CD14-positive monocyte (primary cell): ENCODE measurements at regions of chr5 and their contacts with region 1.

Region 1: DNA sequence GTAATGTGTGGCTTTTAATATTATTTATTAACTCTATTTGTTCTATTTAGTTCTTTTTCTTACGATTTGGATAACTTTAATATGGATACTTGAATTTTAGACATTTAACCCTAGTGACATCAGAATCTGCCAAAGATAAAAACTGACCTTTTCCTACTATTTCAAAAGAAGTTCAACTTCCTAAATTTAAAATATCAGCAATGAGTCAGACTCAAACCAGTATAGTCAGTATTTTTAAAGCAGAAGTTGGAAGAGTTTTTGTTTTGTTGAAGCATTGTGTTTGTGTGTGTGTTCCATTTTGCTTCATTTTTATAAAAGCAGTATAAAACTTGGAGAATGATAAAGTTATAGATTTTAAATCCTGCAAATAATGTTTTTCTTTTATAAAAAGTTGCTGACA is 251.8 kb upstream of the RASA1 start:
- DNase-seq: peak; percentile 58 to 84 (median 69)
- H3K4me3 ChIP-seq: peak overlapping the region in 1 of 3 experiments; percentile 30
- H3K4me3 Mint-ChIP-seq: no peak overlapping the region
- H3K27ac ChIP-seq: peak overlapping the region in 1 of 2 donors; percentile 82
- H3K27ac Mint-ChIP-seq: peak overlapping the region; percentile 78 to 92 (median 86)
- H3K4me1 ChIP-seq: peaks cover 33 to 49% of the 10 kb centered on the region in 2 donors
- H3K4me1 Mint-ChIP-seq: peaks cover 41% of the 10 kb centered on the region
- H3K27me3 ChIP-seq: no peaks in the 10 kb centered on the region
- H3K27me3 Mint-ChIP-seq: peaks cover 0 to 1% (median 0%) of the 10 kb centered on the region in 3 donors
- CTCF ChIP-seq: no peak

Region 2: DNA sequence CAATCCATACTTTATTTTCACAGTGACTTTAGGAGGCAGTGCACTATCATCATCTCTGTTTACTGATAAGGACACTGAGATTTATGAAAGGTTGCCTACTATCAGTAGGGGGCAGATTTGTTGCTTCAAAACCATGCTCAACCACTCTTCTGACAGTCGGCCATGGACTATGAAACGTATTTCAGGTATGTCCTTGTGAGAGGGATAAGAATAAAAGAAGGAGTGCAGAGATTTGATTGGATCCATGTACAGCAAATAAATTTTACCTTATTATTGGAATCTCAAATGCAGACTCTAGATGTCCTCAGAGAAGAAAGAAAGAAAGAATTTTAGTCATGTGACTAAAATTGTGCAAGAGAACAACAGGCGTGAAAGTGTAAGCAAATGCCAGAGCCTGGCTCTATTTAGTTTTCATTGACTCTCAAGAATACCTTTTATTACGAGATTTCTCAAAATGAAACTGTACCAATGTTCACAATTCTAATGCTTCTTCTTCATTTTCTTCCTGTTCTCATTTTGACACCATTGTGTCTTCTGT is 44.8 kb before region 1 on chr5:
- intact Hi-C with region 1: loop called (anchors 5 kb)
- DNase-seq: peak in 2 of 3 donors; percentile 50 to 66
- H3K4me3 ChIP-seq: peak overlapping the region; percentile 1 to 66 (median 30)
- H3K4me3 Mint-ChIP-seq: peak overlapping the region; percentile 21 to 75
- H3K27ac ChIP-seq: peak overlapping the region; percentile 40 to 61
- H3K27ac Mint-ChIP-seq: peak overlapping the region; percentile 52 to 82 (median 77)
- H3K4me1 ChIP-seq: peaks cover 27 to 34% of the 10 kb centered on the region in 2 donors
- H3K4me1 Mint-ChIP-seq: peaks cover 34% of the 10 kb centered on the region
- H3K27me3 ChIP-seq: no peaks in the 10 kb centered on the region
- H3K27me3 Mint-ChIP-seq: peaks cover 0 to 1% (median 0%) of the 10 kb centered on the region in 3 donors
- CTCF ChIP-seq: peak; percentile 64

Region 3: DNA sequence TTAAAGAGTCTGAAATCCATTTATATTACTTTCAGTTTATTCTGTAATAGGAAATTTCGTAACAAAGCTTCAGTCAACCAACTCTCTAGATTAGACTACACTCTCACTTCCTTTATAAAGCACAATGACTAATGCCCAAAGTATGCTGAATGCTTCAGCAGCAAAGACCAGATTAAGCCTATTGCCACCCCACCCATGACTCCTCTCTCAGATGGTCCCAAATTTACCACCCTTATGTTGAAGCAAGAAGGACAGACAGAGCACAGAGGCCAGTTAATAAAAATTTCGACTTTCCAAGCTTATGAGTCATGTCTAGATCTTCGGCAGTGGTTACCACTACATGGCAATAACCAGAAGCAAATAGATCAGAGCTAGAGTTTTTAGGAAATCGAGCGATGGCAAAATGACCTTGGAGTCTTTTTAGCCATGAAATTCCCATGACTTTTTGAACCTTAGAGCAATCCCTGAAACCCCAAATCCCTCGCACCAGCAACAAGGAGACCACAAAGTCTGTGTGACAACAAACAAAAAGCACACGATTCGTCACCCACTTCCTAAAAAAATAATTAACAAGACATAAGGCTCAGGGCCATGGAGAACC is 36.0 kb before region 1 on chr5:
- intact Hi-C with region 1: loop called in 1 of 2 experiments (anchors 5 kb)
- DNase-seq: peak; percentile 81 to 94 (median 91)
- H3K4me3 ChIP-seq: peak overlapping the region in 2 of 3 experiments; percentile 55 to 58
- H3K4me3 Mint-ChIP-seq: peak overlapping the region; percentile 58 to 88
- H3K27ac ChIP-seq: peak overlapping the region; percentile 47 to 94
- H3K27ac Mint-ChIP-seq: peak overlapping the region; percentile 96 to 99 (median 98)
- H3K4me1 ChIP-seq: peaks cover 54 to 62% of the 10 kb centered on the region in 2 donors
- H3K4me1 Mint-ChIP-seq: peaks cover 59% of the 10 kb centered on the region
- H3K27me3 ChIP-seq: no peaks in the 10 kb centered on the region
- H3K27me3 Mint-ChIP-seq: no peaks in the 10 kb centered on the region
- CTCF ChIP-seq: no peak

Region 4: GRCh38 chr5:87048156-87048555 is 32.3 kb after region 1 on chr5:
- intact Hi-C with region 1: no loop called
- DNase-seq: no peak
- H3K4me3 ChIP-seq: no peak overlapping the region
- H3K4me3 Mint-ChIP-seq: no peak overlapping the region
- H3K27ac ChIP-seq: no peak overlapping the region
- H3K27ac Mint-ChIP-seq: no peak overlapping the region
- H3K4me1 ChIP-seq: peaks cover 0 to 8% of the 10 kb centered on the region in 2 donors
- H3K4me1 Mint-ChIP-seq: peaks cover 13% of the 10 kb centered on the region
- H3K27me3 ChIP-seq: no peaks in the 10 kb centered on the region
- H3K27me3 Mint-ChIP-seq: no peaks in the 10 kb centered on the region
- CTCF ChIP-seq: no peak